GM23248 (cell line): ENCODE measurements at regions of chr9 and their contacts with region 1.

Region 1: DNA sequence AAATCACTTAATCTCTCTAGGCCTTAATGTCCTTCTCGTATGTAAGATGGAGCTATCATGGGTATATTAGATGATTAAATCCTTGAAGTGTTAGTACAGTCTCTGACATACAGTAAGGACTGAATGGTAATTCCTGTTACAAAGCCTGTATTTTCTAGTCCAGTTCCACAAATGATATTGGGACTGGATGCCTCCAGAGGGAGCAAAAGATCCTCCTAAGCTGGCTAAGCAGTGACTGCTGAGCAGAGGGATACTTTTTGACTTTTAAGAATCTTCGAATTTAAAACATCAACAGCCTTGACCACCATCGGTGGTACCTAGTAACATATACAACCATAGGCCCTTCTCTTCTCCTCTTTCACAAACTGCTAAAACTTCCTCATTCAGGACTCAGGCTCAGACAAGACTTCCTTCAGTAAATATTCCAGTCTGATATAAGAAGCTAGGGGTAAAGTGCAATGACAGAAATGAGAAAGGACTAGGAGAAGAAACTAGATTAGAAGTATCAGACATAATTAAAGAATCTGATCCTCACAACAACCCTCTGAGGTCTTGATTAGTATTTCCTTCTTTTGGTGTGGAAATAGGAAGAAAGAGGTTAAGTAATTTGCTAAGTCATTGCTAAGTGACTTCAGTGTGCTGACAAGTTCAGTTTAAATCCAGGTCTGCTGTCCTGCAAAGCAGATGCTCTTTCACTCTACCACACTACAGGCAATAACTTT is 13.9 kb downstream of the PTAR1 start:
- DNase-seq: peak; percentile 57
- H3K4me3 ChIP-seq: no peak overlapping the region
- H3K27ac ChIP-seq: 0 out of 2 replicates have a peak overlapping the region, but pooled peaks have one; percentile 6
- H3K4me1 ChIP-seq: peaks cover 34% of the 10 kb centered on the region
- H3K27me3 ChIP-seq: no peaks in the 10 kb centered on the region

Region 2: DNA sequence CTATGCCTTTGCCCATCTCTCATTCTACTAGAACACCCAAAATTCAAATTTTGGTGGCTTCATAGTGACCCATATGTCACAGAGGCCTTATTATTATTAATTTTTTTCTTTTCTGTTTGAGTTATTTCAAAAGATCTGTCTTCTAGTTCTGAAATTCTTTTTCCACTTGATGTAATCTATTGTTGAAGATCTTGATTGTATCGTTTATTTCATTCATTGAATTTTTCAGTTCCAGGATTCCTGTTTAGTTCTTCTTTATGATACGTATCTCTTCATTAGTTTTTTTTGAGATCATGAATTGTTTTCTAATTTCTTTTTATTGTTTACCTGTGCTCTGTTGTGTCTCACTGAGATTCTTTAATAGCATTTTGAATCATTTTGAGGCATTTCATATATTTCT is 49.1 kb before region 1 on chr9:
- in situ Hi-C with region 1: no loop called
- DNase-seq: no peak
- H3K4me3 ChIP-seq: no peak overlapping the region
- H3K27ac ChIP-seq: no peak overlapping the region
- H3K4me1 ChIP-seq: no peaks in the 10 kb centered on the region
- H3K27me3 ChIP-seq: no peaks in the 10 kb centered on the region

Region 3: GRCh38 chr9:69877854-69878514 is 132.1 kb after region 1 on chr9:
- in situ Hi-C with region 1: loop called (anchors 10 kb)
- DNase-seq: peak; percentile 76
- H3K4me3 ChIP-seq: no peak overlapping the region
- H3K27ac ChIP-seq: no peak overlapping the region
- H3K4me1 ChIP-seq: peaks cover 10% of the 10 kb centered on the region
- H3K27me3 ChIP-seq: no peaks in the 10 kb centered on the region

Region 4: DNA sequence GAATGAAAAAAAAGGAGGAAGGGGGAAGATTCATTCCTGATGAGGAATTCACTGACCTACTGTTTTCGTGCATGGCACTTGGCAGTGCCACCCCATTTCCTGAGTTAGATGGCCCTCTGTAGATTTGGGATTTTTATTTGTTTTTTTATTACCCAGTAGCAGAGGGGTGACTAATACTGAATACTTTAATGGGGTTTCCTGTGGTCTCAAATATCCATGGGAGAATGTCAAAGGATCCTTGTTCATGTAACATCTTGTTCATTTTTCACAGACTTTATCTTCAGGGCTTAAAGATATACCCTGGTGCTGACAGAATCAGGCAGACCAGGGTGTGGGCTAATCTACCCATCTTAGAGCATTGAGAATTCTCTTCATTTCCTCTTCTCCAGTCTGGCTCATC is 390.8 kb after region 1 on chr9:
- in situ Hi-C with region 1: no loop called
- DNase-seq: peak; percentile 54
- H3K4me3 ChIP-seq: no peak overlapping the region
- H3K27ac ChIP-seq: no peak overlapping the region
- H3K4me1 ChIP-seq: peaks cover 34% of the 10 kb centered on the region
- H3K27me3 ChIP-seq: no peaks in the 10 kb centered on the region

Region 5: DNA sequence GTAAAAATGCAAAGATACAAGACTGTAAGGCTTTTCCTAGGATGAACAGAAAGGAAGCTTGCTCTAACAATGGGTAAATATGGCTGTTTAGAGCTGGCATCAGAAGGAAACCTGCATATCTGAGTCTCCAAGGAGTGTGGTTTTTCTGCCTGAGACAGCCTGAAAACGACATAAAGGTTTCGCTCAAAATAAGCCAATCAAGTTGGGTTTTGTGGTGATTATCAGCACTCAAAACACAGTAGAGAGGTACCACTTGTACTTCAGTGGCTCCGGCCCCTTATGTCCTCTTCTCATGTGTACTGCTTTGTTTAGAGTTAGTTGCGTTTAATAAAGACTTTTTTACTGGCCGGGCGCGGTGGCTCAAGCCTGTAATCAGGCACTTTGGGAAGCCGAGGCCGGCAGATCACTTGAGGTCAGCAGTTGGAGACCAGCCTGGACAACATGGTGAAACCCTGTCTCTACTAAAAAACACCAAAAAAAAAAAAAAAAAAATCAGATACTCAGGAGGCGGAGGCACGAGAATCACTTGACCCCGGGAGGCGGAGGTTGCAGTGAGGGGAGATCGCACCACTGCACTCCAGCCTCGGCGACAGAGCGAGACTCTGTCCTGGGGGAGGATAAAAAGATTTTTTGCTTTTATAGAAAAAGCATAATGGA is 629.2 kb after region 1 on chr9:
- in situ Hi-C with region 1: no loop called
- DNase-seq: no peak
- H3K4me3 ChIP-seq: no peak overlapping the region
- H3K27ac ChIP-seq: no peak overlapping the region
- H3K4me1 ChIP-seq: no peaks in the 10 kb centered on the region
- H3K27me3 ChIP-seq: no peaks in the 10 kb centered on the region